ENCODE measurements at regions of chr16 and their contacts with region 1.

Region 1: GRCh38 chr16:29995911-29996772 is at the start of gene INO80E:
- DNase-seq: peak; percentile 98 to 99 (median 98)
- H3K4me3 ChIP-seq: peak within 1 kb of the TSS; percentile 72 to 97
- H3K4me3 Mint-ChIP-seq: peak within 1 kb of the TSS; percentile 95 to 98 (median 98)
- H3K27ac ChIP-seq: peak within 1 kb of the TSS; percentile 98
- H3K27ac Mint-ChIP-seq: peak within 1 kb of the TSS; percentile 97 to 99 (median 99)
- H3K4me1 ChIP-seq: peaks cover 23% of the 10 kb centered on the region
- H3K4me1 Mint-ChIP-seq: peaks cover 14 to 44% (median 32%) of the 10 kb centered on the region in 4 donors
- H3K27me3 ChIP-seq: no peaks in the 10 kb centered on the region
- H3K27me3 Mint-ChIP-seq: no peaks in the 10 kb centered on the region
- total RNA-seq, gene INO80E: 124 to 126 TPM

Region 2: GRCh38 chr16:29815793-29816693 is 180.1 kb before region 1 on chr16 and contains the start of gene PAGR1:
- CTCF ChIA-PET with region 1: interaction called, 4 read pairs
- POLR2A ChIA-PET with region 1: interaction called, 10 read pairs
- intact Hi-C with region 1: loop called (anchors 10 kb)
- DNase-seq: peak; percentile 99 to 100 (median 99)
- H3K4me3 ChIP-seq: peak within 1 kb of the TSS; percentile 91 to 95
- H3K4me3 Mint-ChIP-seq: peak within 1 kb of the TSS; percentile 95 to 99 (median 98)
- H3K27ac ChIP-seq: peak within 1 kb of the TSS; percentile 77
- H3K27ac Mint-ChIP-seq: peak within 1 kb of the TSS; percentile 94 to 100 (median 98)
- H3K4me1 ChIP-seq: peaks cover 66% of the 10 kb centered on the region
- H3K4me1 Mint-ChIP-seq: peaks cover 30 to 87% (median 56%) of the 10 kb centered on the region in 4 donors
- H3K27me3 ChIP-seq: no peaks in the 10 kb centered on the region
- H3K27me3 Mint-ChIP-seq: peaks cover 0 to 2% of the 10 kb centered on the region in 2 donors
- total RNA-seq, gene PAGR1: 43.7 to 44.9 TPM

Region 3: GRCh38 chr16:29906520-29907244 is 89.5 kb before region 1 on chr16:
- CTCF ChIA-PET with region 1: no interaction called
- POLR2A ChIA-PET with region 1: no interaction called
- intact Hi-C with region 1: no loop called
- DNase-seq: no peak
- H3K4me3 ChIP-seq: no peak overlapping the region
- H3K4me3 Mint-ChIP-seq: no peak overlapping the region
- H3K27ac ChIP-seq: no peak overlapping the region
- H3K27ac Mint-ChIP-seq: peak overlapping the region in 1 of 7 donors; percentile 90
- H3K4me1 ChIP-seq: no peaks in the 10 kb centered on the region
- H3K4me1 Mint-ChIP-seq: peaks cover 0 to 5% (median 1%) of the 10 kb centered on the region in 4 donors
- H3K27me3 ChIP-seq: no peaks in the 10 kb centered on the region
- H3K27me3 Mint-ChIP-seq: peaks cover 0 to 2% of the 10 kb centered on the region in 2 donors

Region 4: DNA sequence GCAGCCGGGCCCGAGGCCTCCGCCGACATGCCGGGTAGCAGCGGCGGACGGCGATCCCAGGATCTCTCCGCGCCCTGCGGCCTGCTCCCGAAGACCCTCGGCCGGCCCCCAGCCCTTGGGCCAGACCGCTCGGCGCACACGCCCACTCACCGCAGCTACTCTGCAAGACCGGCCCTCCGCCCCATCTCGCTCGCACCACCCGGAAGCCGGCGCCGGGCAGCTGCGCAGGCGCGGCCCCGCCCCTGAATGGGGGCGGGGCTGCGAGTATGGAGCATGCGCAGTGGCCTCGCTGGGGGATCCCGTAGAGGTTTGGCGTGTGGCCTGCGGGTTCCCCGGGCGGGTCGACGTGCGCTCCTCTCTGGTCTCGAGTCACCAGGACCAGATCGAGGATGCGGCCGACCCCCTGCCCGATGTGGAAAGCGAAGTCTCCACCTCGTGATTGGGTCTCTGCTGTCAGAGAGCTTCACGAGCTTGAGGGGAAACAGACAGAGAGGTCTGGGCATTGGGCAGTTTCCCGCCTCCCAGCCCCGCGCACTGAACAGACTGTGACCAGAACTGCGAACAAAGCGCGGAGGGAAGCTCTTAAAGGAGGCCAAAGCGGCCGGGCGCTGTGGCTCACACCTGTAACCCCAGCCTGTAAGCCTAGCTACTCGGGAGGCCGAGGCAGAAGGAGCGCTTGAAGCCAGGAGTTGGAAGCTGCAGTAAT is 70.0 kb before region 1 on chr16 and contains the start of gene KCTD13:
- CTCF ChIA-PET with region 1: no interaction called
- POLR2A ChIA-PET with region 1: interaction called, 24 read pairs
- intact Hi-C with region 1: loop called (anchors 1 kb)
- DNase-seq: peak; percentile 83 to 97 (median 90)
- H3K4me3 ChIP-seq: peak within 1 kb of the TSS; percentile 89 to 95
- H3K4me3 Mint-ChIP-seq: peak within 1 kb of the TSS; percentile 88 to 96 (median 94)
- H3K27ac ChIP-seq: peak within 1 kb of the TSS; percentile 77
- H3K27ac Mint-ChIP-seq: peak within 1 kb of the TSS; percentile 88 to 98 (median 97)
- H3K4me1 ChIP-seq: peaks cover 32% of the 10 kb centered on the region
- H3K4me1 Mint-ChIP-seq: peaks cover 22 to 53% (median 30%) of the 10 kb centered on the region in 4 donors
- H3K27me3 ChIP-seq: no peaks in the 10 kb centered on the region
- H3K27me3 Mint-ChIP-seq: no peaks in the 10 kb centered on the region
- total RNA-seq, gene KCTD13: 85.7 to 87.3 TPM

Region 5: GRCh38 chr16:29973384-29974246 is 22.5 kb before region 1 on chr16 and contains the start of gene TAOK2:
- CTCF ChIA-PET with region 1: interaction called, 3 read pairs
- POLR2A ChIA-PET with region 1: interaction called, 57 read pairs
- intact Hi-C with region 1: loop called (anchors 1 kb)
- DNase-seq: peak; percentile 92 to 94 (median 92)
- H3K4me3 ChIP-seq: peak within 1 kb of the TSS; percentile 74 to 87
- H3K4me3 Mint-ChIP-seq: peak within 1 kb of the TSS; percentile 82 to 97 (median 93)
- H3K27ac ChIP-seq: peak within 1 kb of the TSS; percentile 86
- H3K27ac Mint-ChIP-seq: peak within 1 kb of the TSS; percentile 77 to 97 (median 96)
- H3K4me1 ChIP-seq: peaks cover 36% of the 10 kb centered on the region
- H3K4me1 Mint-ChIP-seq: peaks cover 20 to 49% (median 34%) of the 10 kb centered on the region in 4 donors
- H3K27me3 ChIP-seq: no peaks in the 10 kb centered on the region
- H3K27me3 Mint-ChIP-seq: no peaks in the 10 kb centered on the region
- total RNA-seq, gene TAOK2: 53.8 to 56.0 TPM

Region 6: DNA sequence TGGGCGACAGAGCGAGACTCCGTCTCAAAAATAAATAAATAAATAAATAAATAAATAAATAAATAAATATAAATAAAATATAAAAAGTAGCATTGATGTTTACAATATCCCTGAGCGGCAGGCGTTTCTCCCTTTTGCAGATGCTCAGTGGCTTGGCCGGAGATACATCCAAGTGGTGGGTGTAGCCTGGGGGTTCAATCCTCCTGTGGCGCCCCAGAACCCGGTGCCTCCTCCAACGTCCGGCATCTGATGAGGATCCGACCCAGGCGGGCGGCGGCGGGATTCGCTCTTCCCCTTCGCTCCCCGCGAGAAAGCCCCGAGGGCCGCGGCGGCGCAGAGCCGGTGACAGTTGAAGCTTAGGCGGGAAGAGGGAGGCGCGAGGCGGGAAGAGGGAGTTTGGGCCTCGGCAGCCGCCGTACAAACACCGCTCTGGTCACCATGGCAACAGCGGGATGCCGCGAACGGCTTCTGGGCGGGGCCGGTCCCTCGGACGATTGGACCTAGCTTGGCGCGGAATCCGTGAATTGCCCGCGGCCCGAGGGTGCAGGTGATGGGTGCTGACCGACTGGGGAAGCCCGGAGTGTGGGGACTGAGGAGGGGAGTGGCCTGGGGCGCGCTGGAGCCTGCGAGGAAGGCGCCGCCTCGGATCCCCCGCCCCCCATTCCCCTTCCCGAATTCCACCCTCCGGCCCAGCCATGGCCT is 56.7 kb after region 1 on chr16:
- CTCF ChIA-PET with region 1: no interaction called
- POLR2A ChIA-PET with region 1: no interaction called
- intact Hi-C with region 1: no loop called
- DNase-seq: peak; percentile 80 to 88 (median 82)
- H3K4me3 ChIP-seq: peak overlapping the region; percentile 23 to 64
- H3K4me3 Mint-ChIP-seq: peak overlapping the region; percentile 84 to 93 (median 87)
- H3K27ac ChIP-seq: no peak overlapping the region
- H3K27ac Mint-ChIP-seq: peak overlapping the region in 6 of 7 donors; percentile 53 to 94 (median 79)
- H3K4me1 ChIP-seq: peaks cover 21% of the 10 kb centered on the region
- H3K4me1 Mint-ChIP-seq: peaks cover 10 to 31% (median 23%) of the 10 kb centered on the region in 4 donors
- H3K27me3 ChIP-seq: no peaks in the 10 kb centered on the region
- H3K27me3 Mint-ChIP-seq: no peaks in the 10 kb centered on the region

Measured in CD4-positive, alpha-beta memory T cell (primary cell).